Left cardiac atrium (tissue), 4 donors: ENCODE measurements at regions of chr1 and their contacts with region 1.

Region 1: GRCh38 chr1:229227298-229227919 is 43.5 kb upstream of the RAB4A start:
- DNase-seq: peak; percentile 85
- ATAC-seq: peak; percentile 29 to 51

Region 2: GRCh38 chr1:228691926-228692325 is 535.5 kb before region 1 on chr1:
- intact Hi-C with region 1: loop called in 1 of 2 experiments (anchors 10 kb)
- DNase-seq: no peak
- ATAC-seq: no peak

Region 3: GRCh38 chr1:228734881-228735801 is 492.3 kb before region 1 on chr1 and contains the start of gene RHOU:
- intact Hi-C with region 1: loop called (anchors 5 kb)
- DNase-seq: peak; percentile 85
- ATAC-seq: peak; percentile 92 to 94
- total RNA-seq, gene RHOU: 12.9 to 16.5 TPM

Region 4: GRCh38 chr1:229339520-229339919 is 112.1 kb after region 1 on chr1:
- intact Hi-C with region 1: no loop called
- DNase-seq: no peak
- ATAC-seq: no peak